HEK293 (cell line): ENCODE measurements at regions of chr7 and their contacts with region 1.

Region 1: DNA sequence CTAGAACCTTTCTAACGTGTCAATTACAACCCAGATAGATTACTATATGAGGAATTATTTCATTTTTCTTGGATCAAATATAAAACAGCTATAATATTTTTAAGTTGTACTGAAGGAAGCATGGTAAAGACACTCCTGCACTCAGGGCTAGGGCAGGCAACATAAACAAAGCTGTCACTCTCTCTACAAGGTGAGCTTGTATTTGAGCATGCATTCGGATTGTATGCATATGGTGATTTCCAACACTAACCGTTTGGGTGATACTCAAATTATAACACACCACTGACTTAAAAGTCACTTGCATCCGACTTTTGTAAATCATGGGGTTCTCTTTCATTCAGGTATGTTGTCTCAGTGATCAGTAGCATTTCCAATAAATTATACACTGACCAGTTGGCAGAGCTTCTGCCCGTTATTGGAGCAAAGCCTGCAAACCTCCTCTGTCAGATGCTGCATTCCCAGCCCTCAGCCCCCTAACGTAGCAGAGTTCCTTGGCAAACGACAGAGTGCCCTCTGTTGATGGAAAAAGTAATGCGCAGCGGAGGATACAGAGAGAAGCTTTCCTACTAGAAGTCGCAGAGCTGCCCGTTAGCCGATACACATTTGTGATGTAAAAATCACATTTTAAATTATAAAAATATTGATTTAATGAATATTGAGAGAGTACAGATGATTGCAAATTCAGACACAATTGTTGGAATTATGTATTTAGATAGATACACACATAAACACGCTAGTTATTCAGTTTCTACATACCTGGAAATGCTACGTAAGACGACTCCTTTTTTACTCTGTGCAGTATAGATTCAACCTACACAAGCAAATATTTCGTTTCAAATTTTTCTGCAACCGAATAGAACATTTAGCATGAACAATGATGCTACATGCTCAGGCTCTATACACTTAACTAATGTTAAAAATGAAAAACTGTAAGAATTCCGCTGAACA is 173.9 kb upstream of the SP4 start:
- H3K4me3 ChIP-seq: no peak overlapping the region
- H3K27ac ChIP-seq: no peak overlapping the region
- H3K4me1 ChIP-seq: 0 out of 2 replicates have a peak, but pooled peaks cover 2% of the 10 kb centered on the region
- CTCF ChIP-seq: peak; percentile 47; the same call in 1 of the 2 replicates

Region 2: GRCh38 chr7:20778063-20778721 is 475.8 kb before region 1 on chr7:
- CTCF ChIA-PET with region 1: interaction called, 95 read pairs
- POLR2A ChIA-PET with region 1: no interaction called
- H3K4me3 ChIP-seq: peak overlapping the region; percentile 42
- H3K27ac ChIP-seq: peak overlapping the region; percentile 46; the same call in 1 of the 2 replicates
- H3K4me1 ChIP-seq: 0 out of 2 replicates have a peak, but pooled peaks cover 3% of the 10 kb centered on the region
- CTCF ChIP-seq: no peak

Region 3: DNA sequence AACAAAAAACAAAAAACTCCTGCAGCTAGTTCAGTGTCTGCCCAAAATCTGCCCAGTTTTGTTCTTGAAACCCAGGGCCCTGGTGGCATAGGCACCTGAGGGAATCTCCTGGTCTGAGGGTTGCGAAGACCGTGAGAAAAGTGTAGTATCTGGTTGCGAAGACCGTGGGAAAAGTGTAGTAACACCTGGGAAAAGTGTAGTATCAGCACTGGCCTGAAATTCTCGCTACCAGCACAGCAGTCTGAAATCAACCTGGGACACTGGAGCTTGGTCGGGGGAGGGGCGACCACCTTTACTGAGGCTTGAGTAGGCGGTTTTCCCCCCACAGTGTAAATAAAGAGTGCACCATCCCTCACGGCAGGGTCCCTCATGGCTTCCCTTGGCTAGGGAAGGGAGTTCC is 91.3 kb after region 1 on chr7:
- CTCF ChIA-PET with region 1: no interaction called
- POLR2A ChIA-PET with region 1: no interaction called
- H3K4me3 ChIP-seq: no peak overlapping the region
- H3K27ac ChIP-seq: no peak overlapping the region
- H3K4me1 ChIP-seq: peaks cover 4% of the 10 kb centered on the region
- CTCF ChIP-seq: no peak

Region 4: GRCh38 chr7:21568762-21569161 is 314.7 kb after region 1 on chr7:
- CTCF ChIA-PET with region 1: interaction called, 10 read pairs
- POLR2A ChIA-PET with region 1: no interaction called
- H3K4me3 ChIP-seq: no peak overlapping the region
- H3K27ac ChIP-seq: no peak overlapping the region
- H3K4me1 ChIP-seq: no peaks in the 10 kb centered on the region
- CTCF ChIP-seq: no peak

Region 5: DNA sequence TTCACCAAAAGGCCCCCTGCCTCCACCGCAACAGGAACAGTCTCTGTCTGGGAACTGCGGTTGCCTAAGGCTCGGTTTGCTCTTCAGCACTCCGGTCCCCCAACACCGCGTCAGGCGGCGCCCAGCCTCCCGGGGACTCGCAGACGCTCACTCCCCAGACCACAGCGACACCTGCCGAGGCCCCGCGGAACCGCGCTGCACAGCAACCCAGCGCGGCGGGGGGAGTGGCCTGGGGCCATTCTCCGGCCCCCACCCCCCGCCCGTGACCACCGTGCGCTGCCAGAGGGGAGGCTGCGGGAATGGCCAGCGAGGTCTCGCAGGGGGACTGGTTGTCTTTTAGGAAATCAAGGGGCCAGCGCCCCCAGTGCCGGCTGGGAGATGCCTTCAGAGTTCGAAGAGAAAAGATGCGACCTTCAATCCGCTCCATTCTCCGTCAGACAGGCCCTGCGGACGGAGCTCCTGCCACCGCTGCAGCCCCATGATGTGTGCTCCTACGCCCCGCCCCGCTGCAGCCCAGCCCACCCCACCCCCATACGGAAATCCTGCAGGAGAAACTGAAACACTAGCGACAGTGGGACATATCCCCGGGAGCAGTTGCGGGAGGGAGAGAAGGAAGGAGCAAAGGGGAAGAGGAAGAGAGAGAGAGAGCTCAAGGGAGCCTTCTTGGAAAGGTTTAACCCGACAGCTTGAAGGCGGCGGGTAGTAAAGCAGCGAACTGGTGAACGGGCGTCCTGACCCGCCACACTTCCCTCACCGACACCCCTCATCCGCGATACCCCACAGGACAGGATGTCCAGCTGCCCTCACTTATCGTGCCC is 829.1 kb after region 1 on chr7:
- CTCF ChIA-PET with region 1: interaction called, 16 read pairs
- POLR2A ChIA-PET with region 1: no interaction called
- H3K4me3 ChIP-seq: peak overlapping the region; percentile 63
- H3K27ac ChIP-seq: peak overlapping the region; percentile 47; the same call in 1 of the 2 replicates
- H3K4me1 ChIP-seq: 0 out of 2 replicates have a peak, but pooled peaks cover 3% of the 10 kb centered on the region
- CTCF ChIP-seq: peak; percentile 99